Activated B cell treated with CpG ODN at 0.5 μM for 24 hours (primary cell): ENCODE measurements at regions of chr4 and their contacts with region 1.

Region 1: DNA sequence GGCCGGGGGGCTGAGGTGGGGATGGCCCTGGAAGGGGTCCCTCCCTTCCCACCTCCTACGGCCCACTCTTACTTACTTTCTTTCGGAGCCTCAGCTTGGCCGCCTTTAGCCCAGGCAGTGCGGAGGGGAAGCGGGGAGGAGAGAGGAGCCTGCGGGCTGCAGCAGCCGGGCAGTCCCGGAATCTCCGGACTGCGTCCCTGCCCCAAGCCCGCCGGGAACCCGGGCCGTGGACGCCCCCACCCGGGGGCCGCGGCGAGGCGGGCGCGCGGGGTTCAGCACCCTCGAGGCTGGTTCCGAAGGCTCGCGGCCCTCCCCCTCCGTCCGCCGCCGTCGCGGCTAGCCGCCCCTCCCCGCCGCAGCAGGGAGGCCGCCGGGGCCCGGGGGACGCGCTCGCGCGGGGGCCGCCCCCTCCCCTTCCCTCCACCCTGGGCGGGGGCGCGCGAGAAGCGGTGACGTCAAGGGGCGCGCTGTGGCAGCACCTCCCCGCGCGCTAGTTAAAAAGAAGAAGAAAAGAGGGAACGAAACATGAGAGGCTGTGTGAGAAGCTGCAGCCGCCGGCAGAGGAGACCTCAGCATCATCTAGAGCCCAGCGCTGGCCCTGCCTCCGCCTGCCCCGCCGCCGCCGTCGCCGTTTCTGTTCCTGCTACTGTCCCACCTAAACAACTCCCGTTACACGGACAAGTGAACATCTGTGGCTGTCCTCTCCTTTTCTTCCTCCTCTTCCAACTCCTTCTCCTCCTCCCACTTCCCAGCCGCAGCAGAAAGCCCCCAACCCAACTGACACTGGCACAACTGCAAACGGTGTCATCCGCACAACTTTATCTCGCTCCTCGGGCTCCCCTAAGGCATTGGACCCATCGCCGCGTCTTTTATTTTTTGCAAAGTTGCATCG is at the start of gene HHIP:
- DNase-seq: peak; percentile 32
- ATAC-seq: peak; percentile 65
- H3K4me3 Mint-ChIP-seq: peak within 1 kb of the TSS; percentile 80
- H3K27ac Mint-ChIP-seq: peak within 1 kb of the TSS; percentile 46
- H3K4me1 Mint-ChIP-seq: peaks cover 29% of the 10 kb centered on the region
- H3K27me3 Mint-ChIP-seq: peaks cover 32% of the 10 kb centered on the region
- CTCF ChIP-seq: no peak
- total RNA-seq, gene HHIP: not detected in 2 replicates

Region 2: GRCh38 chr4:144357975-144358374 is 287.9 kb before region 1 on chr4:
- CTCF ChIA-PET with region 1: no interaction called
- POLR2A ChIA-PET with region 1: no interaction called
- intact Hi-C with region 1: loop called (anchors 1 kb)
- DNase-seq: no peak
- ATAC-seq: peak; percentile 62
- H3K4me3 Mint-ChIP-seq: no peak overlapping the region
- H3K27ac Mint-ChIP-seq: no peak overlapping the region
- H3K4me1 Mint-ChIP-seq: peaks cover 25% of the 10 kb centered on the region
- H3K27me3 Mint-ChIP-seq: peaks cover 26% of the 10 kb centered on the region
- CTCF ChIP-seq: no peak

Region 3: GRCh38 chr4:144634978-144635747 is 10.7 kb before region 1 on chr4:
- CTCF ChIA-PET with region 1: no interaction called
- POLR2A ChIA-PET with region 1: interaction called, 4 read pairs
- intact Hi-C with region 1: loop called (anchors 1 kb)
- DNase-seq: no peak
- ATAC-seq: peak; percentile 25
- H3K4me3 Mint-ChIP-seq: no peak overlapping the region
- H3K27ac Mint-ChIP-seq: no peak overlapping the region
- H3K4me1 Mint-ChIP-seq: peaks cover 7% of the 10 kb centered on the region
- H3K27me3 Mint-ChIP-seq: no peaks in the 10 kb centered on the region
- CTCF ChIP-seq: no peak